ENCODE measurements at regions of chr3 and their contacts with region 1.

Region 1: GRCh38 chr3:111610189-111610588 is 15.0 kb upstream of the ZBED2 start:
- DNase-seq: peak; percentile 61
- H3K4me3 Mint-ChIP-seq: peak overlapping the region; percentile 69
- H3K27ac Mint-ChIP-seq: peak overlapping the region; percentile 98
- H3K4me1 Mint-ChIP-seq: peaks cover 98% of the 10 kb centered on the region
- H3K27me3 Mint-ChIP-seq: no peaks in the 10 kb centered on the region

Region 2: DNA sequence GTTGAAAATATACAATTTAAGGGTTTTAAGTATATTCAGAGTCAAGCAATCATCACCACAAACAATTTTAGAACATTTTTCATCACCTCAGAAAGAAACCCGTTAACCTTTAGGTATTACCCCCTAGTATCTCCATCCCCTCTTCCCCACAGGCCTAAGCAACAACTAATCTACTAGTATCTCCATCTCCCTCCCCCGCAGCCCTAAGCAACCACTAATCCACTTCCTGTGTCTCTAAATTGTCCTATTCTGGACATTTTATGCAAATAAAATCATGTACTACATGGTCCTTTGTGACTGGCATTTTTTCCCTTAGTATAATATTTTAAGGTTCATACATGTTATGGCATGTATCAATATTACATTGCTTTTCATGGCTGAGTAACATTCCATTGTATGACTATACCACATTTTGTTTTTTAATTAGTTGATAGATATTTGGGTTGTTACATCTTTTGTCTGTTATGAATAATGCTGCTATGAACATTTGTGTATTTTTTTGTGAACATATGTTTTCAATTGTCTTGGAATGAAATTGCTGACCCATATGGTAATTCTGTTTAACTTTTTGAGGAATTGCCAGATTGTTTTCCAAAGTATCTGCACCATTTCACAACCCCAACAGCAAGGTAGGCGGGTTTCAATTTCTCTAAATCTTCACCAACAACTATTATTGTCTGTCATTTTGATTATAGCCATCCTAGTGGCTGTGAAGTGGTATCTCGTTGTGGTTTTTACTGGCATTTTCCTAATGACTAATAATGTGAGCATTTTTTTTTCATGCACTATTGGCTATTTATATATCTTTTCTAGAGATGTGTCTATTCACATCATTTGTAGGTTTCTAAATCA is 283.8 kb before region 1 on chr3:
- intact Hi-C with region 1: loop called (anchors 2 kb)
- DNase-seq: no peak
- H3K4me3 Mint-ChIP-seq: no peak overlapping the region
- H3K27ac Mint-ChIP-seq: peak overlapping the region; percentile 38
- H3K4me1 Mint-ChIP-seq: peaks cover 36% of the 10 kb centered on the region
- H3K27me3 Mint-ChIP-seq: no peaks in the 10 kb centered on the region